ENCODE measurements at regions of chr3 and their contacts with region 1.

Region 1: GRCh38 chr3:123328851-123329635 is 119.8 kb downstream of the ADCY5 start:
- DNase-seq: peak; percentile 78 to 89
- H3K4me3 ChIP-seq: no peak overlapping the region
- H3K27ac ChIP-seq: peak overlapping the region; percentile 80 to 87
- H3K4me1 ChIP-seq: peaks cover 0 to 81% (median 55%) of the 10 kb centered on the region in 4 donors
- H3K27me3 ChIP-seq: no peaks in the 10 kb centered on the region
- CTCF ChIP-seq: peak; percentile 93 to 94

Region 2: GRCh38 chr3:123447749-123448517 is 118.9 kb after region 1 on chr3:
- intact Hi-C with region 1: loop called (anchors 2 kb)
- DNase-seq: no peak
- H3K4me3 ChIP-seq: peak overlapping the region; percentile 78
- H3K27ac ChIP-seq: peak overlapping the region; percentile 90 to 96
- H3K4me1 ChIP-seq: peaks cover 0 to 41% (median 14%) of the 10 kb centered on the region in 4 donors
- H3K27me3 ChIP-seq: no peaks in the 10 kb centered on the region
- CTCF ChIP-seq: peak in 1 of 2 experiments; percentile 65

Region 3: DNA sequence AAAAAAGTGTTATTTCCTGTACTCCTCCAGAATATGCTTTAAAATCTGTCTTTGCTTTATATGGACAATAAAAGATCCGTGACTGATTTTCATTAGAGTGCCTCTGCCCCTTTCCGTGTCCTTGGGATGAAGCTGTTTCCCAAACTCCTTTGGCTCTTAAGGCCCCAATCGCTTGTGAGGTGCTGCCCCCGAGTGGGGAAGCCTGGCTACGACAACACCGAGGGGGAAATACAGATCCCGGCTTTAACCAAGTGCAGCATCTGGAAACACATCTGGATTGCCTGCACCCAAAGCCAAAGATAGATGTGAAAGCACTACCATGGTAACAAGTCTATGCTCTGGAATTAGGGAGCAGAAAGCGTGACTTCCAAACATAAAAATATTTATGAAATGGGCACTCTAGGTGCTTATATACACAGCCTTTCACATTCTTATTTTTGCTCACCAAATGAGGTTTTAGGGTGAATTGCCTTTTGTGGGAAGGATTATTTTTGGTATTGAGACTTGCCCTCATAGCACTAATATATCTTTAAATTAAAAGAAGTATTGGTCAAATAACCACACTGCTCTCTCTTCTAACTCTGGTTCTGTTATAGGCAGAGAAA is 160.5 kb after region 1 on chr3:
- intact Hi-C with region 1: loop called (anchors 2 kb)
- DNase-seq: peak; percentile 78 to 87
- H3K4me3 ChIP-seq: peak overlapping the region in 1 of 2 donors; percentile 28
- H3K27ac ChIP-seq: peak overlapping the region; percentile 40 to 84
- H3K4me1 ChIP-seq: peaks cover 0 to 32% (median 11%) of the 10 kb centered on the region in 4 donors
- H3K27me3 ChIP-seq: no peaks in the 10 kb centered on the region
- CTCF ChIP-seq: peak; percentile 86 to 92

Region 4: DNA sequence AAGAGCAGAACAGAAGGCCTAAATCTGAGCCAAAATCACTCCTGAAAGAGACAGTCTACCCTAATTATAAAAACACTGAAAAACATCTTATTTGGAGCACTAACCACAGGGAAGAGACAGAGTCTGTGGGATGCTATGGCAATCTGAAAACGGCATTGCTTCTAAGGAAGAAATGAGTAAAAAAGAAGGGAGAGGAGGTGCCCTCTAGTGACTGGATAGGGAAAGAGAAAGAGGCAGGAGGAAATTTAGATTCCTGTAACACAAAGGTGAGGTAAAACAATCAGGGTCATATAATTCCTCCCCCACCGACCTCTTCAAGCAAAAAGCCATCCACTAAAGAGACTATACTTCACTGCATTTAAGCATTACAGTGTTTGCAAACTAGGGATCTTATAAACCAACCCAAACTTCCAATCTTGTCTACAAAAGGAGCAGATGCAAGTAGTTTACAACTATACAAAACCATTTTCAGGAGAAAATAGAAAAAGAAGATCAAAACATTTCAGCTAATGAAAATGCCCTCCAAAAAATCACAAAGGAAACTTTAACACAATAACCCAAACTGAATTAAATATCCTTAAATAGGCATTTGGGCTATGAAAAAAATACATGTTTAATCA is 223.2 kb after region 1 on chr3:
- intact Hi-C with region 1: loop called (anchors 5 kb)
- DNase-seq: no peak
- H3K4me3 ChIP-seq: no peak overlapping the region
- H3K27ac ChIP-seq: no peak overlapping the region
- H3K4me1 ChIP-seq: no peaks in the 10 kb centered on the region
- H3K27me3 ChIP-seq: no peaks in the 10 kb centered on the region
- CTCF ChIP-seq: peak; percentile 37 to 41

Region 5: DNA sequence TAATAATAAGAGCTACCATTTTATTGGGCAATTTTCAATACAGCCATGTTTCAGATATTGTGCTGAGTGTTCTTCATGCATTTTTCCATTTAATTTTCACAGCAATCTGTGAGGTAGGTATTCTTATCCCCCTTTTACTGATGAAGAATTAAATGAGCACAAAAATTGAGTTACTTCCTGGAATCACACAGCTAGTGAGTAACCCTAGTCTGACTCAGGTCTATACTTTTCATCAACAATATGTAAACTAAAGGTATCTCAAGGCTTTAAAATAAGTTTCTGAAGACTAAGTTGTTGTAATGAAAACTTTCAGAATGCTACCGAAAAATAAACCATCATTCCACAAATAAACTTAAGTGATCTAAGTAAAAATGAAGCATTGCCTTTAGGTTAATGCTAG is 233.5 kb after region 1 on chr3:
- intact Hi-C with region 1: no loop called
- DNase-seq: no peak
- H3K4me3 ChIP-seq: no peak overlapping the region
- H3K27ac ChIP-seq: no peak overlapping the region
- H3K4me1 ChIP-seq: no peaks in the 10 kb centered on the region
- H3K27me3 ChIP-seq: no peaks in the 10 kb centered on the region
- CTCF ChIP-seq: no peak